ENCODE measurements at regions of chr13 and their contacts with region 1.

Region 1: GRCh38 chr13:24207841-24208667 is 47.5 kb downstream of the SPATA13 start:
- DNase-seq: peak; percentile 70 to 76
- H3K4me3 ChIP-seq: no peak overlapping the region
- H3K27ac ChIP-seq: peak overlapping the region; percentile 71 to 97 (median 76)
- H3K4me1 ChIP-seq: peaks cover 43 to 51% of the 10 kb centered on the region in 2 donors
- H3K27me3 ChIP-seq: no peaks in the 10 kb centered on the region
- CTCF ChIP-seq: no peak
- POLR2A ChIP-seq: peak in 1 of 2 donors; percentile 51

Region 2: DNA sequence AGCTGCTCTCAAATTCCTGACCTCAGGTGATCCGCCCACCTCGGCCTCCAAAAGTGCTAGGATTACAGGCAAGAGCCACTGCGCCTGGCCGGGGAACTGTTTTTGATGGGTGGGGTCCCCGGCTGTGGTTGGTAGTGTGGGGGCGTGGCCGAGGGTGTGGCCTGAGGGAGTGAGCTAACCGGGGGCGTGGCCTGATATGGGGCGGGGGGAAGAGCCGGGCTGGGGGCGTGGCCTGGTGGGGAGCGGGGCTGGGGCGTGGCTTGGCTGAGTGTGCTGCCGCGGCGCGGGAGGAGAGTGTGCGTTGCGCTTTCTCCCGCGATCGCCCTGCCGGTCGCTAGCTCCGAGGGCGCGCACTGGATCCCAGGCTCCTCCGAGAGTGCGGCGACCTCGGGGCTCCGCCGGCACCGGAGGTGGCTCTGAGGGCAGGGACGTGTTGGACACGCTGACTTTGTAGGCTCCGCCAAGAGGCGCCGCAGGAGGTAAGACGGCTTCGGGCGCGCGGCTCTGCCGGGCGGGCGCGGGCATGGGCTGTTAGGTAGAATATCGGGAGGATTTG is 47.5 kb before region 1 on chr13 and contains the start of gene SPATA13:
- intact Hi-C with region 1: loop called (anchors 5 kb)
- DNase-seq: peak; percentile 97
- H3K4me3 ChIP-seq: peak within 1 kb of the TSS; percentile 81 to 91 (median 81)
- H3K27ac ChIP-seq: peak within 1 kb of the TSS; percentile 73 to 92 (median 86)
- H3K4me1 ChIP-seq: peaks cover 11 to 31% of the 10 kb centered on the region in 2 donors
- H3K27me3 ChIP-seq: no peaks in the 10 kb centered on the region
- CTCF ChIP-seq: no peak
- POLR2A ChIP-seq: peak; percentile 77 to 92
- total RNA-seq, gene SPATA13: 43.2 to 95.4 (median 51.1) TPM